ENCODE measurements at regions of chr11 and their contacts with region 1.

Region 1: DNA sequence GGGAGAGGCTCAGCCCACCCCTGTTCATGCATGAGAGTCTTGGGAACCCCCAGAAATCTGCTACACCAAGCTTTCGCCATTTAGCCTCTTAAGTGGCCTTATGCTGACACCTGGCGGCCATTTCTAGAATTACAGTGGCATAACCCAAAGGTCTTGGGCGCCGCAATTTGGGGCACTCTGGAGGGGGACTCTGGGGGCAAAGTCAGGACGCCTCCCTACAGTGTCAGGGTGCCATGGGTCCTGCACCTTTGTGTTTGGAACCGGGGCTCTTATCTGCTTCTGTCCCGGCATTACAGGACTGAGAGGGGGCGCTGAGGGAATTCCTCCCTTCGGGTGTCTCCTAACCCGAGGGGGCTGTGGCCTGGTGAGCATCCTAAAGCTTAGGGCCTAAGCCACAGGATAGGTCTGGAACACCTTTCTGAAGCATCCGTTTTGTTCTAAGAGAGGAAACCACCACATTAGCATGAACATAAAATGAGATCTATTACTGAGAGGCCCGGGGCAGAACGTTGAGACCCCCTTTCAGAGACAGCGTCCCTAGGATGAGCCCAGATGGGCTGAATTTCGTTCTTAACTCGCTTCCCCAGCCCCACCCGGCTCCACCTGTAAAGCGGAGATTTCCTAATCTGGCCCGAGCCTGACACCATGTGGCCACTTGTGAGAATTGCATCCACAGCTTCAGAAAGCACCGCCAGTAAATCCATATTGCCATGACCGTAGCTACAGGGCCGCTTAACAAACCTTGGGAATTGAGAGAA is 9.3 kb downstream of the INS start:
- DNase-seq: peak; percentile 91
- ATAC-seq: peak; percentile 50
- H3K4me3 Mint-ChIP-seq: no peak overlapping the region
- H3K27ac Mint-ChIP-seq: no peak overlapping the region
- H3K4me1 Mint-ChIP-seq: peaks cover 13% of the 10 kb centered on the region
- H3K27me3 Mint-ChIP-seq: peaks cover 45% of the 10 kb centered on the region
- CTCF ChIP-seq: peak; percentile 89

Region 2: DNA sequence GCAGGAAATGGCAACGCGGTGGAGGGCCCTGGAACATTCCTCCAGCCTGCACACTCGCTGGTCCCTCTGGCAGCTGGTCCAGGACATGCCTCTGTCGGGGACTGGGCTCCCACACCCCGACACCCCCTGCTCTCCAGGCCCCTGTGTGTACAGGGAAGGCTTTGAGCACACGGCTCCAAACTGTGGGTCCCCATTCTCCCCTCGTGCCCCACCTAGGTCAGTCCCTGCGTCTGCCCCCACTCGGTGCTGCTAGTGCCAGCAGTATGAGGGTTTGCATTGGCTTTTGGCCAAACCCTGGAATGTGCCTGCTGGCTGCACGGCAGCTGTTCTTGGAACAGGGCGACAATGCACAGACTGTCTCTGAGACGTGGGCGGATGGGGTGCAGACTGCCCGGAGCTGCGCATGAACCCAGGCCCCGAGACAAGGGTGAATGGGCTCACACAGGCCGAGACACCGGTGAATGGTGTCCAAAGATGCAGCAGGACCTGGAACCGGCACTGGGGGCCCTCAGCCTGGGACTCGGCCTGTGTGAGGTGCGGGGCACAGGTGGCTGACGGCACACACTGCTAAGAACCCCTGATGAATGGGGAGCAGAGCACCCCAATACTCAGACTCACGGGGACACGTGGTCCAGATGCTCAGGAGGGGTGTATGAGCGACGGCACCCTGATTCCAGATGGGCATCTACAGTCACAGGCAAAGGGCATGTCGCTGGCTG is 324.4 kb before region 1 on chr11:
- CTCF ChIA-PET with region 1: interaction called, 110 read pairs
- POLR2A ChIA-PET with region 1: no interaction called
- DNase-seq: no peak
- ATAC-seq: no peak
- H3K4me3 Mint-ChIP-seq: no peak overlapping the region
- H3K27ac Mint-ChIP-seq: no peak overlapping the region
- H3K4me1 Mint-ChIP-seq: peaks cover 4% of the 10 kb centered on the region; the same call in 1 of the 2 replicates
- H3K27me3 Mint-ChIP-seq: no peaks in the 10 kb centered on the region; the same call in 1 of the 2 replicates
- CTCF ChIP-seq: no peak

Region 3: GRCh38 chr11:1870721-1871466 is 280.8 kb before region 1 on chr11:
- CTCF ChIA-PET with region 1: interaction called, 69 read pairs
- POLR2A ChIA-PET with region 1: no interaction called
- DNase-seq: no peak
- ATAC-seq: no peak
- H3K4me3 Mint-ChIP-seq: no peak overlapping the region
- H3K27ac Mint-ChIP-seq: no peak overlapping the region
- H3K4me1 Mint-ChIP-seq: no peaks in the 10 kb centered on the region; the same call in 1 of the 2 replicates
- H3K27me3 Mint-ChIP-seq: no peaks in the 10 kb centered on the region
- CTCF ChIP-seq: no peak

Region 4: GRCh38 chr11:1953489-1954266 is 198.0 kb before region 1 on chr11:
- CTCF ChIA-PET with region 1: interaction called, 41 read pairs
- POLR2A ChIA-PET with region 1: no interaction called
- DNase-seq: no peak
- ATAC-seq: 0 out of 2 replicates have a peak, but pooled peaks have one; percentile 24
- H3K4me3 Mint-ChIP-seq: no peak overlapping the region
- H3K27ac Mint-ChIP-seq: no peak overlapping the region
- H3K4me1 Mint-ChIP-seq: no peaks in the 10 kb centered on the region
- H3K27me3 Mint-ChIP-seq: no peaks in the 10 kb centered on the region
- CTCF ChIP-seq: no peak

Region 5: DNA sequence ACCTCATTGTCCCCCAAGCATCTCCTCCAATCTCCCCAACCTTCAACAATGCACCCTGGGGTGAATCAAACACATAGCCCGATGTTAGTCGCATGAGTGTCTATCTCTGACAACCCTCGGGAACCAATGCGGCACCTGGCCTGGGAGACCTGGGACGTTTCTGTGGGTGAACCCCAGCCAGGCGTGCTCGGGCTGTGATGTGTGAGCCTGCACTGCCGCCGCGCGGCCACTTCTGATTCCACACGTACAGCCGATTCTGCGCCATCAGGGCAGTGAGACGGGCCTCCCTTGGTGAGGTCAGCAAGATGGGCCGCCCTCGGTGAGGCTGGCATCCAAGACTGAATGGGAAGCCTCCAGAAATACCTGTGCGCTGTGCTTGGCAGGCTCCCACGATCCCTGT is 148.9 kb before region 1 on chr11:
- CTCF ChIA-PET with region 1: interaction called, 159 read pairs
- POLR2A ChIA-PET with region 1: no interaction called
- DNase-seq: no peak
- ATAC-seq: no peak
- H3K4me3 Mint-ChIP-seq: no peak overlapping the region
- H3K27ac Mint-ChIP-seq: no peak overlapping the region
- H3K4me1 Mint-ChIP-seq: no peaks in the 10 kb centered on the region
- H3K27me3 Mint-ChIP-seq: no peaks in the 10 kb centered on the region
- CTCF ChIP-seq: no peak

Region 6: DNA sequence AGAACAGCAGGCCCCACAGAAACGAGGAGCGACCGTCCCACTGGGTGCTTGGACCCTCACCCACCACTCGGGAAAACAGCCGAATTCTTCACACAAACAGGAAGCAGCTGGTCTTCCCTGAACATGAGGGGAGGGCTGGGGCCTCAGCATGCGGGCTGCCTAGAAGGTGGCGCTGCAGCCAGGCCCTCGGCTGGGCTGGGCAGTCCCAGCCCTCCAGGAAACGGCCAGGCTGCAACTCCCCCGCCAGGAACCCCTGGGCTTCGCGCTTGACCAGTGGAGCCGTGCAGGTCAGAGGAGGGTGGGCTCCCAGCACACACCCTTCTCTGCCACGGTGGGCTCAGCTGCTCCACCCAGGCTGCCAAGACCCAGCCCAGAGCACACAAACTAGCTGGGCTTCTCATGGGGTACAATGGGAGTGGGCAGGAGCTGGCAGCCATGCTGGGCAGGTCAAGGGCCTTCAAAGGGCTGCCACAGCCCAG is 42.1 kb before region 1 on chr11:
- CTCF ChIA-PET with region 1: interaction called, 12 read pairs
- POLR2A ChIA-PET with region 1: no interaction called
- DNase-seq: no peak
- ATAC-seq: peak; percentile 80
- H3K4me3 Mint-ChIP-seq: no peak overlapping the region
- H3K27ac Mint-ChIP-seq: no peak overlapping the region
- H3K4me1 Mint-ChIP-seq: peaks cover 13% of the 10 kb centered on the region
- H3K27me3 Mint-ChIP-seq: peaks cover 12% of the 10 kb centered on the region
- CTCF ChIP-seq: no peak

Region 7: GRCh38 chr11:2256923-2257716 is 105.4 kb after region 1 on chr11:
- CTCF ChIA-PET with region 1: no interaction called
- POLR2A ChIA-PET with region 1: no interaction called
- DNase-seq: no peak
- ATAC-seq: no peak
- H3K4me3 Mint-ChIP-seq: no peak overlapping the region
- H3K27ac Mint-ChIP-seq: no peak overlapping the region
- H3K4me1 Mint-ChIP-seq: no peaks in the 10 kb centered on the region; the same call in 1 of the 2 replicates
- H3K27me3 Mint-ChIP-seq: peaks cover 8% of the 10 kb centered on the region
- CTCF ChIP-seq: no peak

Measured in WTC11 (cell line).